A549 (cell line): ENCODE measurements at regions of chr10 and their contacts with region 1.

Region 1: GRCh38 chr10:60434418-60435046 is 44.9 kb upstream of the ANK3 start:
- DNase-seq: peak; percentile 24 to 67
- ATAC-seq: peak; percentile 73 to 80; a peak in 5 of 6 replicates
- H3K4me3 ChIP-seq: no peak overlapping the region
- H3K27ac ChIP-seq: no peak overlapping the region
- H3K4me1 ChIP-seq: peaks cover 18% of the 10 kb centered on the region
- CTCF ChIP-seq: peak; percentile 92
- EP300 ChIP-seq: no peak
- POLR2A ChIP-seq: no peak
- RAD21 ChIP-seq: peak; percentile 97

Region 2: DNA sequence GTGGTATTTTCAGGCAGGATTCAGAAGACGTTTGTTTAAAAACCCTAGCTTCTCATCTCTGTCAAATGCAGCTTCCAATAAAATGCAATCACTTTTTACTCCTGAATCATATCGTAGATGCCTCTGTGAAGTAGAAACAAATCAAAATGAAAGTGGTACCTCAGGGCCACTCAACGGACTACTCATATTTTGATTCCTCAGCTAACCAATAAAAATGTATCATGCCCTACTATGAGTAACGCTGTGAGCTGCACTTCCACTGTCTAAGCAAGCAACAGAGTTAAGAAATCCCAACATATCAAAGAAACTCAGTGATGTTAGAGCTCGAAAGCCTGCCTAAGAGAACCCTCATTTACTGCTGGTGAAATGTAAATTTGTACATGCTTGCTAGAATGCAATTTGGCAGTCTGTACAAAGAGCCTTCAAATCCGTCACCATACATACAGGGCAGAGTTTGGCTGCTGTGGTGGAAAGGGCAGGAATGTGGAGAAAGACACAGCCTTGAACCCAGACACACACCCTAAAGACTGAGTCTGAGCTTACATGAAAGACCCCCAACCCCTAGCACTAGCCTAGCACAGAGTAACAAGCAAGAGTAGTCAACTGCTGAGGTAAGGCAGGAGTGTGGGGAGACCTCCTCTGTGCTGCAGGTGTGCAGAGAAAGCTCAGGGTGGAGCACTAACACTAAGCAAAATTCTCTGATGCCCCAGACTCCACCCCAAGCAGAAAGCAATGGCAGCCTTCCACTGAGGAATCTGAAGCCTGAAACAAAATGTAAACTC is 196.4 kb before region 1 on chr10:
- CTCF ChIA-PET with region 1: interaction called, 12 read pairs
- POLR2A ChIA-PET with region 1: no interaction called
- DNase-seq: peak; percentile 13 to 35
- ATAC-seq: peak; percentile 87 to 91
- H3K4me3 ChIP-seq: no peak overlapping the region; the same call in 2 of the 3 replicates
- H3K27ac ChIP-seq: no peak overlapping the region
- H3K4me1 ChIP-seq: 0 out of 3 replicates have a peak, but pooled peaks cover 4% of the 10 kb centered on the region
- CTCF ChIP-seq: peak; percentile 24; the same call in 2 of the 3 replicates
- EP300 ChIP-seq: no peak
- POLR2A ChIP-seq: no peak
- RAD21 ChIP-seq: peak; percentile 55 to 62

Region 3: DNA sequence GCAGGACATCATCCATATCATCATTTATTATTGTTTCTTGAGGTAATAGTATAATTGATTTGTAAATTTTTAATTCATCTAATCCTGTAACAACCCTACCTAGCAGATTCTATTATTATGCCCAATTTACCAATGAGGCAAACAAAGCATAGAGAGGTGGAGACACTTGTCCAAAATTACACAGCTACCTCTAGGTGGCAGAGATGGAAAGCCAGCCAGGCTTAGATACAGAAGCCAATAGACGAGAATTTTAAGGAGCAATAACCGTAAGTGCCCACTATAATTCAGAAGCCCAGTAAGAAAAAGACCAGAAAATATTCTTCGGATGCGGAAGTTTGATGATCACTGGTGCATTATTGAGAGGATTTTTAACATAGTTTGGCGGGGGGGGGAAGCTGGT is 98.8 kb before region 1 on chr10:
- CTCF ChIA-PET with region 1: interaction called, 68 read pairs
- POLR2A ChIA-PET with region 1: interaction called, 3 read pairs
- DNase-seq: peak in 1 of 2 experiments; percentile 18
- ATAC-seq: peak; percentile 84 to 85; a peak in 5 of 6 replicates
- H3K4me3 ChIP-seq: no peak overlapping the region
- H3K27ac ChIP-seq: no peak overlapping the region
- H3K4me1 ChIP-seq: no peaks in the 10 kb centered on the region
- CTCF ChIP-seq: peak; percentile 56
- EP300 ChIP-seq: no peak
- POLR2A ChIP-seq: no peak
- RAD21 ChIP-seq: peak; percentile 75 to 79

Region 4: GRCh38 chr10:60508037-60508436 is 73.5 kb after region 1 on chr10:
- CTCF ChIA-PET with region 1: no interaction called
- POLR2A ChIA-PET with region 1: no interaction called
- DNase-seq: no peak
- ATAC-seq: no peak
- H3K4me3 ChIP-seq: no peak overlapping the region
- H3K27ac ChIP-seq: no peak overlapping the region
- H3K4me1 ChIP-seq: no peaks in the 10 kb centered on the region
- CTCF ChIP-seq: no peak
- EP300 ChIP-seq: no peak
- POLR2A ChIP-seq: no peak
- RAD21 ChIP-seq: no peak